Heart right ventricle (tissue), 16 donors: ENCODE measurements at regions of chr6 and their contacts with region 1.

Region 1: GRCh38 chr6:37705239-37706051 is 7.8 kb upstream of the MDGA1 start:
- DNase-seq: peak; percentile 81 to 86
- ATAC-seq: peak; percentile 89 to 96 (median 93)
- H3K4me3 ChIP-seq: peak overlapping the region; percentile 27 to 61 (median 56)
- H3K27ac ChIP-seq: peak overlapping the region; percentile 37 to 82 (median 72)
- H3K4me1 ChIP-seq: peaks cover 0 to 19% (median 6%) of the 10 kb centered on the region in 9 donors
- H3K27me3 ChIP-seq: peaks cover 0 to 48% (median 0%) of the 10 kb centered on the region in 7 donors
- CTCF ChIP-seq: peak; percentile 38 to 82 (median 72)

Region 2: GRCh38 chr6:38012573-38012972 is 307.1 kb after region 1 on chr6:
- intact Hi-C with region 1: loop called in 6 of 10 experiments (anchors 5 to 10 kb)
- DNase-seq: no peak
- ATAC-seq: peak in 6 of 8 donors; percentile 52 to 80 (median 72)
- H3K4me3 ChIP-seq: no peak overlapping the region
- H3K27ac ChIP-seq: no peak overlapping the region
- H3K4me1 ChIP-seq: peaks cover 0 to 39% (median 13%) of the 10 kb centered on the region in 9 donors
- H3K27me3 ChIP-seq: no peaks in the 10 kb centered on the region
- CTCF ChIP-seq: peak; percentile 30 to 76 (median 66)